Aorta (tissue), 5 donors: ENCODE measurements at regions of chr17 and their contacts with region 1.

Region 1: DNA sequence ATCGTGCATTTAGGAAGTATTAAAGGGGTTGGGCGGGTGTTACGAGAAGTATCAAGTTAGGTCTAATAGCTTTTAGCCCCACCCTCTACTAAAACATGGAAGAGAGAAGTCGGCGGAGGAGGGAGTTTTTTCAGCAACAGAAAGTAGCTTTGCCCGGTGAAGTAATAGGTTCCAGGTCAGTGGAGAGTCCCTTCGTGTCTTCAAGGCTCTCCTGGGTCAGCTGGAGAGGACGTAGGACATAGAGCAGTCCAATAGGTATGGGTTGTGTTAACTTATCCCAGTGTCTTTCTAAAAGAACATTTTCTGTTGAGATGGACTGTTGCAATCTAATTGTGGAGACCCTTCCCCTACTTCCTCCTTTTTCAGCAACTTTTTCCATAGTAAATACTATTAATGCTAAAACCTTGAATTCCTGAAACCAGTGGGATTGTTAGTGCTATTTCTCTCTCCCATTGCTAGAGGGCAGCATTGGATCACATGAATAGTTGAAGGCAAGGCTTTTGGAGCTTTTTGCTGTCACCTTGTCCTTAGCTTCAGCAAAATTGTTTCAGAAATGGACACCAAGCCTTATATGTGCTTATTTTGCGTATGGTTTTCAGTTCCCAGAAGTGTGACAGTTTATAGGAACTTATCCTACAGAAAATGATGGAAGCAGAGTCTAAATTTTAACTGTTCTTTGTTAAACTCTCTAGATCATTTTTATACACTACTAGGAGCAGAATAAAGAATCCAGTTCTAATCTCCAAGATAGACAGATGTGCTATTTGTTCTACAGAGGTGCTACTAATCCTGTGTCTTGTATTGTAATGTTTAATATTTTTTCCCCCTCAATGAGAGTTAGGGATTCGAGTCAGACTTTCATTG is 38.4 kb downstream of the UTP18 start:
- DNase-seq: no peak
- ATAC-seq: no peak
- H3K4me3 ChIP-seq: no peak overlapping the region
- H3K27ac ChIP-seq: no peak overlapping the region
- H3K4me1 ChIP-seq: no peaks in the 10 kb centered on the region
- H3K27me3 ChIP-seq: no peaks in the 10 kb centered on the region

Region 2: DNA sequence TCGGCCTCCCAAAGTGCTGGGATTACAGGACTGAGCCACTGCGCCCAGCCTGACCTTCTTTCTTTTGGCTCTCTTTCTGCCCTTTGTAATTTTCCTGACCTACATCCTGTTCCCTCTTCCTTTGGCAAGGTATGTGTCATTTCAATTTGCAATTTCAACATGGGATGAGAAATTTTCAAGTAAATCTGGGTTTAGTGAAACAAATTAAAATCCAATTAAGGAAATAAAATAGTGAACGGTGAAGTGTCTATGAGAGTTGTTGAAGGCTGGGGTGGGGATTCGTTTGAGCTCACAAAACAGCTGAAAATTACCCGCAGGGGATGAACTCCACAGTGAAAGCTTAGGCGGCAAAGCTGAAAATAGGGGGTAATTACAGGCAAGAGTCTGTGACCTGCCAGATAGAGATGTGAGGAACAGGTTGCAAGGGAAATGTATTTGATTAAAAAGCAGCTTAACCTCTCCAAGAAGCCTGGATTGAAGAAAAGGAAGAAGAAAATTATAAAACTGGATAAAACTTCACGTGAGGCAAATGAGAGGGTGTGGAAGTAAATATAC is 239.3 kb after region 1 on chr17:
- intact Hi-C with region 1: loop called (anchors 10 kb)
- DNase-seq: no peak
- ATAC-seq: no peak
- H3K4me3 ChIP-seq: no peak overlapping the region
- H3K27ac ChIP-seq: no peak overlapping the region
- H3K4me1 ChIP-seq: no peaks in the 10 kb centered on the region
- H3K27me3 ChIP-seq: no peaks in the 10 kb centered on the region